ENCODE measurements at regions of chr19 and their contacts with region 1.

Region 1: DNA sequence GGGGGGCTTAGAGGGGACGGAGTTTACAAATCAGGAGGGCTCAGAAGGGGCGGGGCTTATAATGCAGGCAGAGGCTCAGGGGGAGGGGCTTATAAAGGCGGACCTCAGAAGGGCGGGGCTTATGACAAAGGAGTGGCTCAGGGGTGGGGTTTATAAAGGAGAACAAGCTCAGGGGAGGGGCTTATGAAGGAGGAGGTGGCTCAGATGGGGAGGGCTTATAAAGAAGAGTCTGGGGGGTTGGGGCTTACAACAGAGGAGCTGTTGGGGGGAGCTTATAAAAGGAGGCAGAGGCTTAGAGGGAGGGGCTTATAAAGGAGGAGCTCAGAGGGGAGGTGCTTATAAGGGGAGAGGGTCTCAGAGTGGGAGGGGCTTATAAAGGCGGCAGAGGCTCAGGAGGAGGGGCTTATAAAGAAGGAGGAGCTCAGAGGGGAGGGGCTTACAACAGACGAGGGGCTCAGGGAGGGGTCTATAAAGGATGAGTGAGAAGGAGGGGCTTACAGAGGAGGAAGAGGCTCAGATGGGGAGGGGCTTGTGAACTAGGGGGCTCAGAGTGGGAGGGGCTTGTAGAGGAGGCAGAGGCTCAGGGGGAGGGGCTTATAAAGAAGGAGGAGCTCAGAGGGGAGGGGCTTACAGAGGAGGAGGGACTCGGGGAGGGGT is 1.0 kb downstream of the SMIM24 start:
- DNase-seq: peak; percentile 83
- CTCF ChIP-seq: no peak

Region 2: GRCh38 chr19:2950286-2951124 is 528.8 kb before region 1 on chr19:
- in situ Hi-C with region 1: loop called (anchors 25 kb)
- DNase-seq: peak; percentile 98
- CTCF ChIP-seq: no peak

Region 3: GRCh38 chr19:3586124-3586626 is 106.9 kb after region 1 on chr19:
- in situ Hi-C with region 1: no loop called
- DNase-seq: no peak
- CTCF ChIP-seq: peak; percentile 53

Measured in GM13977 (cell line).